Transverse colon (tissue), 4 donors: ENCODE measurements at regions of chr12 and their contacts with region 1.

Region 1: DNA sequence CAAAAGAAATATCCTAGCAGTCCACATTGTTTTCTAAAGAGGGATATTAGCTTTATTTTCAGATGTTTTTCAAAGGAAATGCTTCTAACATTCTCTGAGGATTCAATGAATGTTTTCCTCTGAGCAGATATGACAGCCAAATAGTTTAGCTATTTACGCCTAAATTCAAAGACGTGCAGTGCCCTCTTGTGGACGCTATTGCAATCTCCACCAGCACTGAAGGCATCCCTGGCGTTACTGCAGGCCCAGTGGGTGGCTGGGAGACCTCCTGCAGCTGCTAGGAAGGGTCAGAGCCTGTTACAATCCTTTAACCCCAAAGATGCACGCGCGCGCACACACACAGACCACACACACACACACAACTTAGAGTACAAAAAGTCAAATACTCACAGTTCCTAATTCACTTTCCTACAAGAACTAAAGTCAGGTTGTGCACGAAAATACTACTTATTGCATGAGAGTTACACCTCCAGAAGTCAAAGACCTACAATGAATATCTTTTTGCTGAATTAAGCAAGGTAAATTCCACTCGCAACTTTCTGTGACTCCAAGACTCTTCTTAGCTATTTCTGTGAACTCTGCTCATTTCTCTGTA is 589.3 kb upstream of the TMEM132C start:
- DNase-seq: peak; percentile 56
- H3K4me3 ChIP-seq: no peak overlapping the region
- H3K27ac ChIP-seq: no peak overlapping the region
- H3K4me1 ChIP-seq: no peaks in the 10 kb centered on the region
- H3K27me3 ChIP-seq: no peaks in the 10 kb centered on the region
- CTCF ChIP-seq: peak; percentile 56 to 68 (median 61)
- EP300 ChIP-seq: no peak
- POLR2A ChIP-seq: no peak

Region 2: GRCh38 chr12:127334912-127335644 is 342.6 kb before region 1 on chr12:
- in situ Hi-C with region 1: no loop called
- intact Hi-C with region 1: no loop called
- DNase-seq: no peak
- H3K4me3 ChIP-seq: no peak overlapping the region
- H3K27ac ChIP-seq: no peak overlapping the region
- H3K4me1 ChIP-seq: no peaks in the 10 kb centered on the region
- H3K27me3 ChIP-seq: no peaks in the 10 kb centered on the region
- CTCF ChIP-seq: no peak
- EP300 ChIP-seq: no peak
- POLR2A ChIP-seq: no peak

Region 3: GRCh38 chr12:127711108-127711507 is 33.5 kb after region 1 on chr12:
- in situ Hi-C with region 1: no loop called
- intact Hi-C with region 1: no loop called
- DNase-seq: no peak
- H3K4me3 ChIP-seq: no peak overlapping the region
- H3K27ac ChIP-seq: no peak overlapping the region
- H3K4me1 ChIP-seq: no peaks in the 10 kb centered on the region
- H3K27me3 ChIP-seq: no peaks in the 10 kb centered on the region
- CTCF ChIP-seq: peak in 1 of 5 experiments; percentile 11
- EP300 ChIP-seq: no peak
- POLR2A ChIP-seq: no peak

Region 4: DNA sequence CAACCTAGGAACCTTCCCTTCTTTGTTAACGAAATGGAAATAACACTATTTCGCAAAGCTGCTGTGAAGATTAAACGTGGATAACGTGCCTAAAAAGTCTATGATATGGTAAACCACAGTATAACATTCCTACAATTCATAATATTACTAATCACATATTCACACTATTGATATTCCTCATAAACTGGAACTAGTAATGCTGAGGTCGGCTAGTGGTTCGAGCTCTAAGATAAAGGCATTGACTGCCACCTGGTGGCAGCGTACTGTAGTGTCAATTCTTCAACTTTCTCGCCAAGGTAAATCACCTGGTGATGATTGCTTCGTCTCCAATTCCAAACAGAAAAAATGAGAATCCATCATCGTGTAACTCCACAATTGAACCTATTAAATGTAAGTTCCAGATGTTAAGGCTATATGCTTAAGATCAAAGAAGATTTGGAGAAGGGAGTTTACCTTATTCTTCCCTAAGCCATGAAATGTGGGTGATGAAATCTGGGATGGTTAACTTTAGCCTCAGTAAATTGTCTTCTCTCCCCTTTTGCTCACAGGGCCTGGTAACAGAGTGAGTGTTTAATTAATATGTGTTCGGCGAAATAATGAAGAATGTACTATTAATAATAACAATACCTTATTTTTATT is 391.8 kb after region 1 on chr12:
- in situ Hi-C with region 1: loop called in 1 of 4 experiments (anchors 25 kb)
- intact Hi-C with region 1: no loop called
- DNase-seq: peak; percentile 63
- H3K4me3 ChIP-seq: no peak overlapping the region
- H3K27ac ChIP-seq: no peak overlapping the region
- H3K4me1 ChIP-seq: no peaks in the 10 kb centered on the region
- H3K27me3 ChIP-seq: no peaks in the 10 kb centered on the region
- CTCF ChIP-seq: peak; percentile 44 to 78 (median 68)
- EP300 ChIP-seq: no peak
- POLR2A ChIP-seq: no peak